CD8-positive, alpha-beta memory T cell (primary cell): ENCODE measurements at regions of chr14 and their contacts with region 1.

Region 1: GRCh38 chr14:105020815-105021655 is at the start of gene CDCA4:
- DNase-seq: peak; percentile 96 to 98 (median 97)
- H3K4me3 ChIP-seq: peak within 1 kb of the TSS; percentile 69
- H3K4me3 Mint-ChIP-seq: peak within 1 kb of the TSS; percentile 86 to 96 (median 93)
- H3K27ac ChIP-seq: peak within 1 kb of the TSS; percentile 86
- H3K27ac Mint-ChIP-seq: peak within 1 kb of the TSS; percentile 90 to 99 (median 96)
- H3K4me1 ChIP-seq: peaks cover 49% of the 10 kb centered on the region
- H3K4me1 Mint-ChIP-seq: peaks cover 57 to 78% (median 68%) of the 10 kb centered on the region in 3 donors
- H3K27me3 ChIP-seq: no peaks in the 10 kb centered on the region
- H3K27me3 Mint-ChIP-seq: peaks cover 0 to 3% of the 10 kb centered on the region in 2 donors
- total RNA-seq, gene CDCA4: 73.0 to 76.7 TPM

Region 2: DNA sequence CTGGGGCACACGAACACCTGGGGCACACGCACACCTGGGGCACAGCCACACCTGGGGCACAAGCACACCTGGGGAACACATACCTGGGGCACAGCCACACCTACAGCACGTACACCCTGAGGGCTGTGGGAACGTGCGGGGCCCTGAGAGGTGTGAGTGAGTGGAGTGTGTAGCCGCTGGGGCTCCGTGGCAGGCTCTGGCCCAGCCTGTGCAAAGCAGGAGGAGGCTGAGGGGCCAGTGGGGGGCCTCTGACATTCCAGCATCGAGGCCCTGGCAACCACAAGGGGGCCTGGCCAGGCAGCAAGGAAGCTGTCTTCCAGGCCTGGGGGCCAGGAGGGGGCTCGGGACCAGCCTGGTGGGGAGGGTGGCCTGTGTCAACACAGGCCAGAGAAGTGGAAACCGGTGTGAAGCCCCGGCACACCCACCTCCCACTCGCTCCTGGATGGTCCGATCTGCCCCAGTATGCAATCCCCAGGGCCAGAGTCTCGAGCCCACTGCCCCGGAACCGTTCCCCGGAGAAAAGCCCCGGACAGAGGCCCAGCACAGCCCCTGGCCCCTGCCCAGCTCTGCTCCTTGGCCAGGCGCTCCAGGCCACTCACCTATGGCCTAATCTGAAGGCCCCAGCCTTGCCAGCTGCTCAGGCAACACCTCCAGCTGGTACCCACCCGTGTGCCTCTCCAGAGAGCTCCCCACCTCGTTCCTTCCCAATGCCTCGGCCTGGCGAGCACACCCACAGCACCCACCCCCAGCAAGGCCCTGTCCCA is 243.4 kb before region 1 on chr14:
- CTCF ChIA-PET with region 1: no interaction called
- POLR2A ChIA-PET with region 1: no interaction called
- DNase-seq: no peak
- H3K4me3 ChIP-seq: no peak overlapping the region
- H3K4me3 Mint-ChIP-seq: no peak overlapping the region
- H3K27ac ChIP-seq: no peak overlapping the region
- H3K27ac Mint-ChIP-seq: peak overlapping the region in 2 of 8 donors; percentile 33 to 46
- H3K4me1 ChIP-seq: no peaks in the 10 kb centered on the region
- H3K4me1 Mint-ChIP-seq: no peaks in the 10 kb centered on the region
- H3K27me3 ChIP-seq: no peaks in the 10 kb centered on the region
- H3K27me3 Mint-ChIP-seq: no peaks in the 10 kb centered on the region

Region 3: DNA sequence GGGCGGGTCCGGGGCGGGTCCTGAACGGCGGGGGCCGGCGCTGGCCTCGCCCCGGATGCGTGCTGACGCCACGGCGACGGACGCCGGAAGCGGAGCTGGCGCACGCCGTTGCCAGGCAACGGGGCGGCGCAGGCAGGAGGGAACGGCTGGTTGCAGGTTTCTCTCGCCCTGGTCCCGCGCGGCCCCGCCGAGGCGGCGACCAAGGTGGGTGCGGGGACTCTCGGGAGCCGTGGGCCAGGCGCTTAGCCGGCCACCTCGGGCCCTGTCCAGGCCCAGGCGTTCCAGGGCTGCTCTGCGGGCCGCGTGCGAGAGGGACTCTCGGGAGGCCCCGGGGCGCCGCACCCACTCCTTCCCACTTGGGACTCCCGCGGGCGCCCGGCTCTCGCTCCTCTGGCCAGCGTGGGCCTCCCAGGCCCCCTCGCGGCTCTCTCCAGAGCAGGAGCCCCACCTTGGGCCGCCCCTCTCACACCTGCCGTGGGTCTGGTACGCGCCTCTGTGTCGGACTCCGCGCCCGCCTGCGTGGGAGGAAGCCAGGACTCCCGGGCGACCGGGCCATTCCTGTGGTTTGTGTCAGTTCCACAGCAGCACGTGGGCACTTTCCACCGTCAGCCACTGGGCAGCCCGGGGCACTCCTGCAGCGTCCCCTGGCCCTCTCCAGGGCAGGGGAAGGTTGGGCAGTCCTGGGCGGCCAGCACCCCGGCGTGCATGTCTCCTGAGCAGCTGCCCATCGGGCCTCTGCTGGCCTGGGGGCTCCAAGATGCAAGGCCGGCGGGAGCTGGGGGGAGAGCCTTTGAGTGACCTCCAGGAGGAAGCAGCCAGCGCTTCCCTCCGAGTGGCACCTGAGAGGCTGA is 35.1 kb before region 1 on chr14 and contains the start of gene CLBA1:
- CTCF ChIA-PET with region 1: interaction called, 4 read pairs
- POLR2A ChIA-PET with region 1: interaction called, 20 read pairs
- DNase-seq: peak; percentile 85 to 92 (median 89)
- H3K4me3 ChIP-seq: peak within 1 kb of the TSS; percentile 50
- H3K4me3 Mint-ChIP-seq: peak within 1 kb of the TSS; percentile 60 to 94 (median 76)
- H3K27ac ChIP-seq: peak within 1 kb of the TSS; percentile 78
- H3K27ac Mint-ChIP-seq: peak within 1 kb of the TSS; percentile 34 to 93 (median 80)
- H3K4me1 ChIP-seq: peaks cover 6% of the 10 kb centered on the region
- H3K4me1 Mint-ChIP-seq: peaks cover 0 to 7% (median 5%) of the 10 kb centered on the region in 3 donors
- H3K27me3 ChIP-seq: peaks cover 6% of the 10 kb centered on the region
- H3K27me3 Mint-ChIP-seq: peaks cover 1 to 3% of the 10 kb centered on the region in 2 donors
- total RNA-seq, gene CLBA1: 3.8 to 3.9 TPM

Region 4: GRCh38 chr14:104999361-104999760 is 21.7 kb before region 1 on chr14:
- CTCF ChIA-PET with region 1: no interaction called
- POLR2A ChIA-PET with region 1: no interaction called
- DNase-seq: no peak
- H3K4me3 ChIP-seq: no peak overlapping the region
- H3K4me3 Mint-ChIP-seq: no peak overlapping the region
- H3K27ac ChIP-seq: no peak overlapping the region
- H3K27ac Mint-ChIP-seq: peak overlapping the region in 1 of 8 donors; percentile 42
- H3K4me1 ChIP-seq: no peaks in the 10 kb centered on the region
- H3K4me1 Mint-ChIP-seq: no peaks in the 10 kb centered on the region
- H3K27me3 ChIP-seq: no peaks in the 10 kb centered on the region
- H3K27me3 Mint-ChIP-seq: no peaks in the 10 kb centered on the region

Region 5: DNA sequence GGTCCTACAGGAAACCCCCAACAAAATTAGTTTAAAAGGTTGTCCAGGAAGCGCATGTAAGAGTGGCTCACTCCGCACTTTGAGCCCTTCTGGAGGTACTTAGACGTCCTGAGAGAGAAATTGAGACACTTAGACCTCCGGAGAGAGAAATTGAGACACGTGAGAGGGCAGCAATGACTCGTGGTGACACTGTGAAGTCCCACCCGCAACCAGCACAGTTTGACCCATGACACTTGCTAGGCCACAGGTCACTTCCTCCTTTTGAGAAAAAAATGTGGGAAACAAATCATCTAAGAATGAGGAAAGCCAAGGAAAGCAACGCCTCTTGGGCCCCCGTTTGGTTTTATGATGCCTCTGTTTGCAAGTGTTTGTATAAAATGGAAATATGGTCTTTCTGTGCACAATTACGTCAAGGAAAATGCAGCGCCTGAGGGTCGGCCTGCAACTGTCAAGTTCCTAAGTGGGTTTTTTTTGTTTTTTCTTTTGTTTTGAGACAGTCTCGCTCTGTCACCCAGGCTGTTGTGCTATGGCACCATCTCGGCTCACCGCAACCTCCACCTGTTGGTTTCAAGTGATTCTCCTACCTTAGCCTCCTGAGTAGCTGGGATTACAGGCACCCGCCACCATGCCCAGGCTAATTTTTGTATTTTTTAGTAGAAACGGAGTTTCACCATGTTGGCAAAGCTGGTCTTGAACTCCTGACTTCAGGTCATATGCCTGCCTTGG is 13.4 kb after region 1 on chr14:
- CTCF ChIA-PET with region 1: interaction called, 4 read pairs
- POLR2A ChIA-PET with region 1: interaction called, 18 read pairs
- DNase-seq: no peak
- H3K4me3 ChIP-seq: no peak overlapping the region
- H3K4me3 Mint-ChIP-seq: peak overlapping the region; percentile 43 to 96 (median 90)
- H3K27ac ChIP-seq: no peak overlapping the region
- H3K27ac Mint-ChIP-seq: peak overlapping the region in 7 of 8 donors; percentile 35 to 95 (median 90)
- H3K4me1 ChIP-seq: peaks cover 4% of the 10 kb centered on the region
- H3K4me1 Mint-ChIP-seq: peaks cover 17 to 22% (median 22%) of the 10 kb centered on the region in 3 donors
- H3K27me3 ChIP-seq: no peaks in the 10 kb centered on the region
- H3K27me3 Mint-ChIP-seq: no peaks in the 10 kb centered on the region

Region 6: GRCh38 chr14:105065280-105066228 is 44.5 kb after region 1 on chr14 and contains the start of gene GPR132:
- CTCF ChIA-PET with region 1: interaction called, 4 read pairs
- POLR2A ChIA-PET with region 1: interaction called, 14 read pairs
- DNase-seq: peak; percentile 82 to 97 (median 96)
- H3K4me3 ChIP-seq: peak within 1 kb of the TSS; percentile 99
- H3K4me3 Mint-ChIP-seq: peak within 1 kb of the TSS; percentile 88 to 100 (median 94)
- H3K27ac ChIP-seq: peak within 1 kb of the TSS; percentile 89
- H3K27ac Mint-ChIP-seq: peak within 1 kb of the TSS; percentile 94 to 100 (median 98)
- H3K4me1 ChIP-seq: peaks cover 86% of the 10 kb centered on the region
- H3K4me1 Mint-ChIP-seq: peaks cover 63 to 91% (median 69%) of the 10 kb centered on the region in 3 donors
- H3K27me3 ChIP-seq: no peaks in the 10 kb centered on the region
- H3K27me3 Mint-ChIP-seq: peaks cover 0 to 2% of the 10 kb centered on the region in 2 donors
- total RNA-seq, gene GPR132: 51.3 to 52.0 TPM